OCI-LY7 (cell line): ENCODE measurements at regions of chr2 and their contacts with region 1.

Region 1: DNA sequence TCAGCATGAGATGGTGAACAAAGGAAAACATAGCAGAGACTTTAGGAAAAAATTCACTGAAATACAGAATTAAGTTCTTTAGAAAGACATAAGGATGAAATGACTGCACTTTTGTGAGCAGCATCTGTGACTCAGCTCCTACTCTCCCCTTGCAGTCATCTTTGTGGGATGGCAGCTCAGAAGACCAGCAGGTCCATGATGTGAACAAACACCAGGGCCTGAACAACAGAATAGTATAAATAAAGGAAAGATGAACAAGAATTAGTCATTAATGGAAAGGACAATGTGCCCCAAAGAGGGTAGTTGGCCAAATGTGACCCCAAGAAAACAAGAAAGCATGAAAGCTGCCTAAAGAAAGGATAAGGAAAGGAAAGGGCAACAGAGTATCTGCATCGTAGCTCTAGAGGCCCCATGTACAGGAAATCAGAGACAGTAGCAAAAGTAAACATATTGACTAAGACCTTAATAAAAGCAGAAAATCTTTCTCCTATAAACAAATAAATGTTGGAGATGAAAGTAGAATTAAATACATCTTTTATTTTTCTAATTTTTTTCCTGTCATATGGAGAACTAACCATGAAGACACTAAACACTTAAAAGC is 318.0 kb downstream of the ZEB2 start:
- DNase-seq: no peak
- H3K4me3 ChIP-seq: no peak overlapping the region
- H3K27ac ChIP-seq: no peak overlapping the region
- H3K4me1 ChIP-seq: peaks cover 5% of the 10 kb centered on the region
- CTCF ChIP-seq: no peak

Region 2: DNA sequence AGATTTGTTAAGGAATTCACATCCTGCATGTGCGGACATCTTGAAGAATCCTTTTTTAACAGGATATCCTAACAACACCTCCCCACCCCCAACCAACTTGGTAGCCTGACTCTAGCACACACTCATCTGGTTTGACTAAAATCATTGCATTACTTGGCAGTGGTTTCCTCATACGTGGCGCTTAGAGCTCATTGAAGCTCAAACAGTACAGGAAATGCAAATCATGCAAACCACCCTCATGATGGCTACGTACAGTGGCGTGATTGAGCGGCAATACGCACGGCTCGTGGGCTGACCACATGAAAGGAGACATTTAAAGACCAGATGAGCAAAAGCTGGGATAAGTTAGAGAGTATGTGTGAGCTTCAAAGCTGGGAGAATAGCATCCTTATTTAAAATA is 18.2 kb before region 1 on chr2:
- CTCF ChIA-PET with region 1: no interaction called
- POLR2A ChIA-PET with region 1: interaction called, 10 read pairs
- intact Hi-C with region 1: no loop called
- DNase-seq: peak; percentile 55
- H3K4me3 ChIP-seq: no peak overlapping the region
- H3K27ac ChIP-seq: no peak overlapping the region
- H3K4me1 ChIP-seq: peaks cover 19% of the 10 kb centered on the region
- CTCF ChIP-seq: no peak